ENCODE measurements at regions of chr7 and their contacts with region 1.

Region 1: DNA sequence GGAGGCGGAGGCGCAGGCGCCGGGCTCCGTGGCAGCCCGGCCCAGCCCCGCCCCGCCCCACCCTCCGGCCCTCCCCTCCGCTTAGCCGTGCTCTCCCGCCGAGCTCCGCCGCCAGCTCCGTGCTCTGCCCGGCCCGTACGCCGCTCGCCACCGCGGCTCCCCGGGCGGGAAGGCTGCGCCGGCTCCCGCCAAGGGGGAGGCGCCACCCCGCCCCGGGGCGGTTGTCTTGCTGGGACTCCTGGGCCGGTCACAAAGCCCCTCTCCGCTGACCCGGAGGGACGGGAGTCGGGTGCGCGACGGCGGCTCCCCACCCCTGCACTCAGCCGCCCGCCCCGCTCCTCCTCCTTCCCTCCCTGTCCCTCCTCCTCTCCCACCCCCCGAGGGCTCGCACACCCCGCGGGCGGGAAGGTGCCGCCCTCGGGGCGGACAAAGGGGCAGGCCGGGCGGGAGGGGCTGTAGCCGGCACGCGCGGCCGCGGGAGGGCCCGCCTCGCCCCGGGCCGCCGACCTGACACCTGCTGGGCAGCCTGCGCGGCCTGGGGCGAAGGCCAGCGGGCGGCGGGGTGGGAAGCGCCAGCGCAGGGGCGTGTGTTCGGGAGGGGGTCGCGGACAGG is 11.5 kb upstream of the SP8 start:
- DNase-seq: peak; percentile 4
- ATAC-seq: peak; percentile 81
- H3K4me3 Mint-ChIP-seq: no peak overlapping the region
- H3K27ac Mint-ChIP-seq: no peak overlapping the region
- H3K4me1 Mint-ChIP-seq: peaks cover 18% of the 10 kb centered on the region
- H3K27me3 Mint-ChIP-seq: peaks cover 50% of the 10 kb centered on the region
- CTCF ChIP-seq: no peak

Region 2: DNA sequence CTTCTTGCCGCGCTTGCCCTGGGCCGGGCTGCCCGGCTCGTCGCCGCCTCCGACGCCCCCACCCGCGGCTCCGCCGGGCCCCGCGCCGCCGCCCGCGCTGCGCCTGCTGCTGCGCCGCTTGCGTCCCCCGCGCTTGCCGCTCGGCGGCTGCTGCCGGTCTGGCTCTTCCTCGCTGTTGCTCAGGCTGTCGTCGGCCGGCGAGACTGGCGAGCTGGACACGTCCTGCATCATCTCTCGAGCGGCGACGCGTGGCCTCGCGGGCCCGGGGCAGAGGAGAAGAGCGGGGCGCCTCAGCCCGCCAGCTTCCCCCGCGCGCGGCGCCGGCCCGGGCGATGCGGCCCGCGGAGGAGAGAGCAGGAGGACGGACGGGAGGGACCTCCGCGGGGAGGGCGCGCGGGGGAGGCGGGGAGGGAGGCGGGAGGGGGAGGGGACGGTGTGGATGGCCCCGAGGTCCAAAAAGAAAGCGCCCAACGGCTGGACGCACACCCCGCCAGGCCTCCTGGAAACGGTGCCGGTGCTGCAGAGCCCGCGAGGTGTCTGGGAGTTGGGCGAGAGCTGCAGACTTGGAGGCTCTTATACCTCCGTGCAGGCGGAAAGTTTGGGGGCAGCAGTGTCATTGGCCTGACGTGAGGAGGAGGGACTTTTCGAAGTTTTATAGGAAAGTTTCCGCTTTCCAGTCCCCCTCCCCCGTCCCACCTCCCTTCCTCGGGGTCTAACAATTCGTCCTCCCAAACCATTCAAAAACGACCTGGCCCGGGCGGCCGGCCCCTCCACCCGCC is 1680.9 kb before region 1 on chr7 and contains the start of gene TWIST1:
- CTCF ChIA-PET with region 1: no interaction called
- POLR2A ChIA-PET with region 1: no interaction called
- intact Hi-C with region 1: loop called (anchors 10 kb)
- DNase-seq: no peak
- ATAC-seq: peak; percentile 58
- H3K4me3 Mint-ChIP-seq: no peak within 1 kb of the TSS
- H3K27ac Mint-ChIP-seq: no peak within 1 kb of the TSS
- H3K4me1 Mint-ChIP-seq: peaks cover 2% of the 10 kb centered on the region
- H3K27me3 Mint-ChIP-seq: peaks cover 59% of the 10 kb centered on the region
- CTCF ChIP-seq: no peak
- total RNA-seq, gene TWIST1: 0.20 TPM in 1 of 2 experiments, not detected in the other

Region 3: GRCh38 chr7:20913853-20914252 is 115.7 kb after region 1 on chr7:
- CTCF ChIA-PET with region 1: no interaction called
- POLR2A ChIA-PET with region 1: no interaction called
- intact Hi-C with region 1: no loop called
- DNase-seq: no peak
- ATAC-seq: no peak
- H3K4me3 Mint-ChIP-seq: no peak overlapping the region
- H3K27ac Mint-ChIP-seq: no peak overlapping the region
- H3K4me1 Mint-ChIP-seq: no peaks in the 10 kb centered on the region
- H3K27me3 Mint-ChIP-seq: no peaks in the 10 kb centered on the region
- CTCF ChIP-seq: no peak

Region 4: GRCh38 chr7:21071561-21072501 is 273.6 kb after region 1 on chr7:
- CTCF ChIA-PET with region 1: no interaction called
- POLR2A ChIA-PET with region 1: no interaction called
- intact Hi-C with region 1: no loop called
- DNase-seq: no peak
- ATAC-seq: no peak
- H3K4me3 Mint-ChIP-seq: no peak overlapping the region
- H3K27ac Mint-ChIP-seq: no peak overlapping the region
- H3K4me1 Mint-ChIP-seq: no peaks in the 10 kb centered on the region
- H3K27me3 Mint-ChIP-seq: peaks cover 2% of the 10 kb centered on the region
- CTCF ChIP-seq: no peak